Activated T-helper 1 cell treated with anti-CD3 and anti-CD28 coated beads, Interleukin-12 subunit alpha, Interleukin-12 subunit beta, Interleukin-2, Interleukin-4 antibody, amounts not matched to agents 30 ng/mL and 10 ng/mL and 1 ng/mL, durations not matched to agents 14 hours and 24 hours and 36 hours (primary cell): ENCODE measurements at regions of chr2 and their contacts with region 1.

Region 1: GRCh38 chr2:129748653-129749052 is 230.8 kb upstream of the RAB6C start:
- DNase-seq: no peak
- H3K4me3 Mint-ChIP-seq: no peak overlapping the region
- H3K27ac Mint-ChIP-seq: no peak overlapping the region
- H3K4me1 Mint-ChIP-seq: no peaks in the 10 kb centered on the region
- H3K27me3 Mint-ChIP-seq: no peaks in the 10 kb centered on the region

Region 2: DNA sequence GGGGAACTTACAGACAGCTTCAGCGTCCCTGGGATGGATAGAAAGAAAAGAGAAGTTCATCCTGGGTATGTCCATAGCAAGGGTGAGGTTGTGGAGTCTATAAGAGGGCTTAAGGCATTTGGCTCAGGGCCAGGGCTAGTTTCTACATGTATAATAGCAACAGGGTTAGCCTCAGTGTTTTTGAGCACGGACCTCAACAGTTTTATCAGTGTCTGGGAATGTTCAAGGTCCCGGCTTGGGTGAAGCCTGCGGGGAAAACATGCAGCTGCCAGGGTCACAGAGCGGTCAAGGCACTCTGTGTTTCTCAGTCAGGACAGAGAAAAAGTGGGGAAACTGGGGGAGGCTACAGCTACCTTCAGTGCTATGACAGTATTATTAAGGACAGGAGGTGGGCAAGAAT is 1002.3 kb before region 1 on chr2:
- intact Hi-C with region 1: loop called (anchors 5 kb)
- DNase-seq: no peak
- H3K4me3 Mint-ChIP-seq: no peak overlapping the region
- H3K27ac Mint-ChIP-seq: no peak overlapping the region
- H3K4me1 Mint-ChIP-seq: no peaks in the 10 kb centered on the region
- H3K27me3 Mint-ChIP-seq: peaks cover 22% of the 10 kb centered on the region

Region 3: GRCh38 chr2:129016972-129017371 is 731.7 kb before region 1 on chr2:
- intact Hi-C with region 1: no loop called
- DNase-seq: no peak
- H3K4me3 Mint-ChIP-seq: no peak overlapping the region
- H3K27ac Mint-ChIP-seq: no peak overlapping the region
- H3K4me1 Mint-ChIP-seq: no peaks in the 10 kb centered on the region
- H3K27me3 Mint-ChIP-seq: peaks cover 2% of the 10 kb centered on the region